ENCODE measurements at regions of chr22 and their contacts with region 1.

Region 1: DNA sequence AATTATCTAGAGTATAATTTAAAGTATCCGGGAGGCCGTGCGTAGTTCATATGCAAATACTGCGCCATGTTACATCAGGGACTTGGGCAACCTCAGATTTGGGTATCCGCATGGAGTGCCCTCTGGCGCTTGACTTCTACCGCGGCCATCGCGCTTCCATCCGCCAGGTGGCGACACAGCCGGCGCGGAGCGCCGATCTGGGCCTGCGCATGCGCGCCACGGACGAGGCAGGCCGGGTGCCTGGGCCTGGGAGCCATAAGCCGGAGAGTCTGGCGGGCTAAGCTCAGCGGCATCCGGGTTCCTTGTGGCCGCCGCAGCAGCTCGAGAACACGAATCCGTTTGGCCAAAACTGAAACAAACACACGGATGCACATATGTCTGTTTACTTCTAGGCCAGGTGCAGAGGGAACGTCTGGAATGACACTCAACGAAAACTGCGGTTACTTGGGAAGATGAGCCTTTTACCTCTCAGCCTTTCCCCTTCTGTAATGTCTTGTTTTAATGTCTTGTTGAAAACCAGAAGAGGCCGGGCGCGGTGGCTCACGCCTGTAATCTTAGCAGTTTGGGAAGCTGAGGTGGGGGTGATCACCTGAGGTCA is 21.9 kb downstream of the SNU13 start:
- DNase-seq: peak; percentile 92
- ATAC-seq: peak; percentile 86
- H3K4me3 Mint-ChIP-seq: peak overlapping the region; percentile 60
- H3K27ac Mint-ChIP-seq: peak overlapping the region; percentile 98
- H3K4me1 Mint-ChIP-seq: peaks cover 12% of the 10 kb centered on the region
- H3K27me3 Mint-ChIP-seq: no peaks in the 10 kb centered on the region
- CTCF ChIP-seq: peak; percentile 87

Region 2: DNA sequence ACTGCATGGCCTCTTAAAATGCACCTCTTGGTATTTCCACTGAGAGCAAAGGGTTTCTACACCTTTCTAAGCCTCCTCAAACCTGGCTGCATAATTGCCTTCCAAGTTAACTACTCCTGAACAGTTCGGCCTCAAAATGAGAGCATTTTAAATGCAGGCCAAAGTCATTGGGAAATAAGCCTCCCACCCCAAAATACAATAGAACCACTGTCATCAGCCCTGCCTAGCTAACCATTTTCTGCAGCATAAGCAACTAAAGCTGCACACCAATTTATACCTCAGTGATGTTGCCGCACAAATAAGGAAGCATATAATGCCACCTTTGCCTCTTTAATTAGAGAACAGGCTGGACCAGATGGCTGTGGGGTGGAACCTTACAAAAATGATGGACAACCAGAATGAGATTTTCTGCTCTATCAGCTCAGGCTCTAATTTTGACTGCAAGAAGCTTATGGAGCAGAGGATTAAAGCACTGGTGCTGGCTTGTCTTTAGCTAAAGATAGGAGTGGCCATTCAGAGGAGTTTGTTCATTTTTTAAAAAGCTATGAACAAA is 224.4 kb before region 1 on chr22:
- CTCF ChIA-PET with region 1: no interaction called
- POLR2A ChIA-PET with region 1: no interaction called
- DNase-seq: no peak
- ATAC-seq: no peak
- H3K4me3 Mint-ChIP-seq: peak overlapping the region; percentile 96
- H3K27ac Mint-ChIP-seq: peak overlapping the region; percentile 49; the same call in 1 of the 2 replicates
- H3K4me1 Mint-ChIP-seq: peaks cover 14% of the 10 kb centered on the region
- H3K27me3 Mint-ChIP-seq: no peaks in the 10 kb centered on the region
- CTCF ChIP-seq: no peak

Region 3: DNA sequence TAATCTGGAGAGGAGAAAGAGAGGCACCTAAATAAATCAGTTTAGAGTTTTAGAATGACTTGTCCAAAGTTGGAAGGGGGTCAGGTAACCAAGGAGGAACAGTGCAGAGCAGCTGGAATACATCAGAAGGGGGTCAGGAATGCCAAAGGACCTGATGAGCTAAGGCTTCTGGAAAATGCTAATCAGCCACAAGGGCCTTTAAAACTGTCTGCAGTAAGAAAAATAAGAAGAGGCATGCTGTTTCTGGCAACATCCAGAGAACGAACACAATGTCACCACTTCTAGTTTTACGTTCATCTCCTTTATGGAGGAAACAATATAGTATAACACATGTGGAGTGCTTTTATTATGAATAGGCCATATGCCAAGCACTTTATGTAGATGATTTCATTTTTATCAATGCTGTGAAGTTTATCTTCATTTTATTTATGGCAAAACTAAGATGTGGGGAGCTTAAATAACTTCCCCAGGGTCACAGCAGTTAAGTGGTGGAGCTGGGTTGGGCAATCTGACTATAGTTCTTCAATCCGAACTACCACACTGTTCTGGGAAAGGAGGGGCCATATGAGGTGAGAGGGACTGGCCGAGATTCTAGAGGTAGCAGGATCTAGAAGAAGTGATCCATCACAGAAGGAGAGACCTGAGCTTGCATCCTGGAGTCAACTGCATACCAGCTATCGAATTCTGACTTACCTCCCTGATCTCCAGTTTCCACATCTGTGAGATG is 175.2 kb before region 1 on chr22:
- CTCF ChIA-PET with region 1: no interaction called
- POLR2A ChIA-PET with region 1: no interaction called
- DNase-seq: no peak
- ATAC-seq: no peak
- H3K4me3 Mint-ChIP-seq: no peak overlapping the region
- H3K27ac Mint-ChIP-seq: peak overlapping the region; percentile 78
- H3K4me1 Mint-ChIP-seq: peaks cover 50% of the 10 kb centered on the region
- H3K27me3 Mint-ChIP-seq: no peaks in the 10 kb centered on the region
- CTCF ChIP-seq: no peak

Region 4: DNA sequence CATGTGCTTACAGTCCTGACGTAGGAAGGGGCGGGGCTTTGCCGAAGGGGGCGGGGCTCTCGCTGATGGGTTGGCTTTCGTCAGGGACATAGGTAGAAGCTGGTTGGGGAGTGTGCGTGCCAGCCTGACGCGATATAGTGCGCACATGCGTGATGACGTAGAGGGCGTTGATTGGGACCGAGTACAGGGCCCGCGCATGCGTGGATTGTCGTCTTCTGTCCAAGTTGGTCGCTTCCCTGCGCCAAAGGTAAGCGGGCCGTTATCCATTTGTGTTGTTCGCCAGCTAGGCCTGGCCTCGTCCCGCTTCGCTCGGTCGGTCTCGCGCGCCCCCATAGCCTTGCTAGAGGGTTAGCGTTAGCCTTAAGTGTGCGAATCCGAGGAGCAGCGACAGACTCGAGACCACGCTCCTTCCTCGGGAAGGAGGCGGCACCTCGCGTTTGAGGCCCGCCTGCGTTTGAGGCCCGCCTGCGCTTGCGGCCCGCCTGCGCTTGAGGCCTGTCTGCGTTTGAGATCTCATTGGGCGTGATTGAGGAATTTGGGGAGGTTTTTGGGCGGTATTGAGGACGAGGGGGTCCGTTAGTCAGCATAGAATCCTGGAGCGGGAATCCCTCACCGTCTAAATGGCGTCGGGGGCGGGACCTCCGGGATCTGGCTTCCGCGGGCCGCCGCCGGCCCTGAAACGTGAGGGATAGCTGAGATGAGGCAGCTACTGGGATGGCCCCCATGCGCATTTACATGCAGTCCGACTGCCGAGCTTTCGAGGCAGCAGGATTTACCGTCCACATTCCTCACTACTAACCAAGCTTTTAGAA is 45.5 kb before region 1 on chr22 and contains the start of gene XRCC6:
- CTCF ChIA-PET with region 1: interaction called, 19 read pairs
- POLR2A ChIA-PET with region 1: interaction called, 4 read pairs
- DNase-seq: peak; percentile 100
- ATAC-seq: peak; percentile 92
- H3K4me3 Mint-ChIP-seq: peak within 1 kb of the TSS; percentile 94
- H3K27ac Mint-ChIP-seq: peak within 1 kb of the TSS; percentile 99
- H3K4me1 Mint-ChIP-seq: peaks cover 20% of the 10 kb centered on the region
- H3K27me3 Mint-ChIP-seq: no peaks in the 10 kb centered on the region; the same call in 1 of the 2 replicates
- CTCF ChIP-seq: no peak
- total RNA-seq, gene XRCC6: 410 to 474 TPM (median 420 TPM) in 3 replicates

Region 5: GRCh38 chr22:41688365-41689211 is 21.8 kb after region 1 on chr22 and contains the start of gene SNU13:
- CTCF ChIA-PET with region 1: interaction called, 27 read pairs
- POLR2A ChIA-PET with region 1: interaction called, 7 read pairs
- DNase-seq: peak; percentile 82
- ATAC-seq: peak; percentile 84
- H3K4me3 Mint-ChIP-seq: peak within 1 kb of the TSS; percentile 82
- H3K27ac Mint-ChIP-seq: peak within 1 kb of the TSS; percentile 94
- H3K4me1 Mint-ChIP-seq: peaks cover 11% of the 10 kb centered on the region
- H3K27me3 Mint-ChIP-seq: no peaks in the 10 kb centered on the region
- CTCF ChIP-seq: no peak
- total RNA-seq, gene SNU13: 188 to 207 TPM (median 188 TPM) in 3 replicates

Region 6: DNA sequence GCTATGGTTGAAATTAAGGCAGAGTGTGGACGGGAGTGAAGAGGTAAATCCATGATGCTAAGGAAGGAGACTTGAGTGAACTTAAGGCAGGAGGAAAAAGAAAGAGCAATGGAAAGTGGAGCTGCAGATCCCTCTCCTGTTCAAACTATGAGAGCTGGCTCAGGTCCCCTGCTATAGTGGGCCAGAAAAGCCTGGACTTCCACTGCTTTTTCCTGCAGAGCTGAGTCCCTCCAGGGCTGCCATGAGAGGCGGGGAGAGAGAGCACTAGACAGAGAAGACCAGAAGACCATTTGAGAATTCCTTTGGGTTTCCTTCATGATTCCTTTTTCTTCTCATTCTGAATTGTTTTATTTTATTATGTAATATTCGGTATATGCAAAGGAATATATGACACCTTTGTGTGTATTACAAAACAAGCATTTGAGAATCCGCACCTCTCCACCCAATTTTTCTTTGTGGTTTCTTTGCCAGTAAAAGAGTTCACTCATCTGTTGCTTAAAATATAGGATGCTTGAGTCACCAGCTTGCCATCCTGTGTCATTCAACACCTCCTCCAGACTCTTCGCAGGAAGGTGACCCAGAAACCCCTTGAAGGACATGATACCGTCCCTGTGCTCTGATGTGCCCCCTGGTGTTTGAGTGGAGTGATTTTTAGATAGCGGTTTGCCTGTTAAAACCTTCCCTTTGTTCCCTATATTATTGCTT is 190.5 kb after region 1 on chr22:
- CTCF ChIA-PET with region 1: interaction called, 11 read pairs
- POLR2A ChIA-PET with region 1: no interaction called
- DNase-seq: peak; percentile 69
- ATAC-seq: peak; percentile 93
- H3K4me3 Mint-ChIP-seq: no peak overlapping the region
- H3K27ac Mint-ChIP-seq: peak overlapping the region; percentile 86
- H3K4me1 Mint-ChIP-seq: peaks cover 25% of the 10 kb centered on the region
- H3K27me3 Mint-ChIP-seq: no peaks in the 10 kb centered on the region
- CTCF ChIP-seq: peak; percentile 43; the same call in 1 of the 2 replicates

Region 7: GRCh38 chr22:41946629-41947423 is 280.1 kb after region 1 on chr22 and contains the start of gene CENPM:
- CTCF ChIA-PET with region 1: interaction called, 12 read pairs
- POLR2A ChIA-PET with region 1: no interaction called
- DNase-seq: peak; percentile 95
- ATAC-seq: peak; percentile 93
- H3K4me3 Mint-ChIP-seq: peak within 1 kb of the TSS; percentile 73
- H3K27ac Mint-ChIP-seq: peak within 1 kb of the TSS; percentile 49; the same call in 1 of the 2 replicates
- H3K4me1 Mint-ChIP-seq: peaks cover 46% of the 10 kb centered on the region
- H3K27me3 Mint-ChIP-seq: peaks cover 4% of the 10 kb centered on the region; the same call in 1 of the 2 replicates
- CTCF ChIP-seq: no peak
- total RNA-seq, gene CENPM: 40.3 to 43.7 TPM (median 41.7 TPM) in 3 replicates

Measured in WTC11 (cell line).